ENCODE measurements at regions of chr5 and their contacts with region 1.

Region 1: GRCh38 chr5:172059661-172060100 is 53.2 kb upstream of the FBXW11 start:
- DNase-seq: no peak
- H3K4me3 ChIP-seq: no peak overlapping the region
- CTCF ChIP-seq: peak; percentile 29

Region 2: GRCh38 chr5:172044631-172045314 is 14.9 kb before region 1 on chr5:
- CTCF ChIA-PET with region 1: interaction called, 17 read pairs
- POLR2A ChIA-PET with region 1: no interaction called
- DNase-seq: no peak
- H3K4me3 ChIP-seq: no peak overlapping the region
- CTCF ChIP-seq: no peak

Region 3: DNA sequence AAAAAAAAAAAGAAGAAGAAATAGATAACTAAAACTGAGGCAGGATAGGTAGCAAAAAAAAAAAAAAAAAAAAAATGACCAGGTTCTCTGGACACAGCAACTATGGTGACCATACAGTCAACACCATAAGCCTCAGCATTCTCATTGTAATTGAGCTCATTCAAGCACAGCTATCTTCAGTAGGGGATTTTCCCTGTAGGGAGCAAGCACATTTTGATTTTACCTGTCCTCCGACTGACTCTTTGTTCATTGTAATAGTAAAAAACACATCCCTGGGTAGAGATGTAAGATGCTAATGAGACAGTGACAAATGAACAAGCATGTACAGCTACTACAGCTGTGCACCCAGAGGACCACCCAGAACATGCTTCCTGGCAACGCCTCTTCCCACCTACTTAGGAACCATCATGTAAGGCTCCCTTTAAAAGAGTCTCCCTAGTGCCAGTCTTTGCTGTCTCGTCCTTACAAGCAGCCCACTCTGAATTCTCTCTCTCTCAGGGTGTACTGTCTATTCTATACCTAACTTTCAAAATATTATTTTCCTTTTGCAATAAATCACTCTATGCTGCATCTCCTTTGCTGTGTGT is 11.7 kb after region 1 on chr5:
- CTCF ChIA-PET with region 1: interaction called, 41 read pairs
- POLR2A ChIA-PET with region 1: no interaction called
- DNase-seq: no peak
- H3K4me3 ChIP-seq: no peak overlapping the region
- CTCF ChIP-seq: no peak

Region 4: DNA sequence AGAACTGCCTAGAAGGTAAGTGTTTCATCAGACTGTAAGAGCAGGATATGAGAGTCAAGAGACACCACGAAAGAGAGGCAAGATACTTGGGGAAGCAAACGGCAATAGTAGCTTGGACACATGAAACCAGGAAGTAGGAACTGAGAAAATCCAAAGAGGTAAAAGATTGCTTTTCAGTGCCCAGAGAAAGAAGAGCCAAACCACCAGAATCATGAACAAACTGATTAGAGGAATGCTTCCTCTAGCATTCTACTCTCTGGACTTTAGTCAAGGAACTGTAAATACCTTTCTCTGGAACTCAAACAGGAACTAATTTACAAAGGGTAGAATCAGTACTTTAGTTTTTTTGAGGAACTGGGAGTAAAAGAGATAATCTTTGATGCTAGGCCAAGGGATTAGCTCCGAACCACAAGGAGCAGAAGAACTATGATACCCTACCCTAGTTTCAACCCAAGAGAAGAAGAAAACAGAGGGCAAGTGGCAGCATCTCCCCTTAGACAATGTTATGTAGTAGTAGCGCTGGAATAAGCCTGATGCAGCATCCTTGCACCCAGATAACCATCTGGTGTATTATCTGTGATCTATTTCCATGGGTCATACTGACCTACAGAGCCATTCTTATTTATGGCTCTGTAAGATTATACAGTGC is 175.6 kb after region 1 on chr5:
- CTCF ChIA-PET with region 1: no interaction called
- POLR2A ChIA-PET with region 1: no interaction called
- DNase-seq: no peak
- H3K4me3 ChIP-seq: no peak overlapping the region
- CTCF ChIP-seq: no peak

Region 5: GRCh38 chr5:172594867-172595466 is 535.3 kb after region 1 on chr5:
- CTCF ChIA-PET with region 1: no interaction called
- POLR2A ChIA-PET with region 1: no interaction called
- DNase-seq: no peak
- H3K4me3 ChIP-seq: no peak overlapping the region
- CTCF ChIP-seq: no peak